HEK293 (cell line): ENCODE measurements at regions of chr5 and their contacts with region 1.

Region 1: GRCh38 chr5:93620487-93621326 is 37.7 kb downstream of the NR2F1 start:
- H3K4me3 ChIP-seq: peak overlapping the region; percentile 72
- H3K27ac ChIP-seq: peak overlapping the region; percentile 93
- H3K4me1 ChIP-seq: no peaks in the 10 kb centered on the region
- CTCF ChIP-seq: peak; percentile 77

Region 2: DNA sequence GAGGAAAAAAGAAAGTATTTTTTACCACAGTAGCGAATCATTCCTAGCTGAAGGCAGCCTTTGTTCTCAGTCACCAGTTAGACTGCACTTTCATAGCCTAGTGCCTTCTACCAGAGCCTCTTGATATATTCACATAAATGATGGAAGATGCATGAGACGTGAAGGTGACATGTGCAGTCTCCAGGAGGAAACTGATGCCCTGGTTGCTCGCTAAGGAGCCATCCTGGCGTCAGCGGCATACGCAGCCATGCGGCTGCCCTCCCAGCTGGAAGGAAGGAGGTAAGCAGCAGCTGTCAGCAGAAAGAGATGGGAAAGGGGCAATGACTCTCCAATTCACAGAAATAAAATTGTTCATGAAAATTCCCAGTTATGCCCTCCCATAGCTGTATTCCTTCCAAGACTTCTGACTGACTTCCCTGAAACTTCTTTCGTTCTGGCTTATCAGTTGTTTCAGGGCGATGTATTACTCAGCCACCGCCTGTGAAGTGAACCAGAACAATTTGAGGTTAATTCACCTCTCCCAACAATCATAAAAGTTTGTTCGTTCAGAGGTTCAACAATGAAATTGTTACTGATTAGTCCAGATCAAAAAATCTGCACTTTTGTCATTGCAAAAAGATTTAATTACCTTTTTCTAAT is 370.9 kb before region 1 on chr5:
- CTCF ChIA-PET with region 1: no interaction called
- POLR2A ChIA-PET with region 1: no interaction called
- H3K4me3 ChIP-seq: peak overlapping the region; percentile 22
- H3K27ac ChIP-seq: peak overlapping the region; percentile 57; the same call in 1 of the 2 replicates
- H3K4me1 ChIP-seq: peaks cover 9% of the 10 kb centered on the region
- CTCF ChIP-seq: no peak

Region 3: GRCh38 chr5:93461756-93462155 is 159.0 kb before region 1 on chr5:
- CTCF ChIA-PET with region 1: no interaction called
- POLR2A ChIA-PET with region 1: no interaction called
- H3K4me3 ChIP-seq: no peak overlapping the region
- H3K27ac ChIP-seq: no peak overlapping the region
- H3K4me1 ChIP-seq: no peaks in the 10 kb centered on the region
- CTCF ChIP-seq: no peak

Region 4: GRCh38 chr5:93582677-93583438 is 37.8 kb before region 1 on chr5 and contains the start of gene NR2F1:
- CTCF ChIA-PET with region 1: interaction called, 4 read pairs
- POLR2A ChIA-PET with region 1: interaction called, 24 read pairs
- H3K4me3 ChIP-seq: peak within 1 kb of the TSS; percentile 78
- H3K27ac ChIP-seq: peak within 1 kb of the TSS; percentile 97
- H3K4me1 ChIP-seq: peaks cover 7% of the 10 kb centered on the region; the same call in 1 of the 2 replicates
- CTCF ChIP-seq: 0 out of 2 replicates have a peak, but pooled peaks have one; percentile 15

Region 5: DNA sequence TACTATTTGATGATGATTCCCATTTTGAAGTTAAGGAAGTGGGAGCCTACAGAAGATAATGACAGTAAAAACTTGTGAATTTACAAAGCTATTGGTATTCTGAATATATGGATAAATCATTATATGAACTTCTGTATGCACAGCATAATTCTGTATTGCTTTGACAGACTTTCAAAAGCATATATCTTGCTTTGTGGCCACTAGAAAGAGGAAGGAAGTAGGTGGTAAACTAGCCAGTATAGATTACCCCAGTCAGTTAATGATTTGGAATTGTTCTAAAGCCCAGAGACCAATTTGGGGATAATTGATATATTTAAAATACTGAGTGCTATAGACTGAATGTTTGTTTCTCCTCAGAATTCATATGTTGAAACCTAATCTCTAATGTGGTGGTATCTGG is 15.3 kb after region 1 on chr5:
- CTCF ChIA-PET with region 1: no interaction called
- POLR2A ChIA-PET with region 1: no interaction called
- H3K4me3 ChIP-seq: no peak overlapping the region
- H3K27ac ChIP-seq: no peak overlapping the region
- H3K4me1 ChIP-seq: 0 out of 2 replicates have a peak, but pooled peaks cover 3% of the 10 kb centered on the region
- CTCF ChIP-seq: no peak